Activated B cell treated with CpG ODN at 0.5 μM for 24 hours (primary cell): ENCODE measurements at regions of chr3 and their contacts with region 1.

Region 1: DNA sequence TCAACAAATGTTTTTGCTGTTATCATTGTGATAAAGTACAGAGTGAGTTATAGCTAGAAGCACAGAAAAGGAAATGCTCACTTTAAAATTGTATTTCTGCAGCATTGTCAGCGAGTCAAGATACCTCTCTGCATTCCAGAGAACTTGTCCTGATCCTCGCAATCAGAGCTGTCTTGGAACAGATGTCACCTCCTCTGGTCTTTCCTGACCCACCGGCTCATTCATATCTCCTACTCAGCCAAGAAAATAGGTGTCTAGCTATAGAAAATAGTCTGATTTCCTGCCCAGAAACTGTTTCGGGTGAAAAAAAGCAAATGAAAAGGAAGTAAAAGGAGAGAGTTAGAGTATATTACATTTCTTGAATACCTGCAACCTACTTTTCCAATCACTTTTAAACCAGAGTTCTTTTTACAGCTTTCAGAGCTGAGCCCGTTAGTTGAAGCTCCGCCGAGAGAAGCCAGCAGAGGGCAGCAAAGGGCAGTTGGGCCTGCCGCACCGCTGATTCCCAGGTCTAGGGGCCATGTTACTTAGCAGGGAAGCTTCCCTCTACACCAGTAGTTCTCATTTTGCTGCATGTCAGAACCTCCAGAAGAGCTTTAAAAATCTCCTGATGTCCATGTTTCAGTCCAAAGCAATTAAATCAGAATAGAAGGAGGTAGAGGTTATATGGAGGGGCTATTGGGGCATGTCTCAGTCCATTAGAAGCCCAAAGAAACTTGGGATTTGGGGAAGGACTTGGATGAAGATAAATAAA is 185.7 kb upstream of the THRB start:
- DNase-seq: peak; percentile 28
- ATAC-seq: no peak
- H3K4me3 Mint-ChIP-seq: no peak overlapping the region
- H3K27ac Mint-ChIP-seq: no peak overlapping the region
- H3K4me1 Mint-ChIP-seq: peaks cover 7% of the 10 kb centered on the region
- H3K27me3 Mint-ChIP-seq: no peaks in the 10 kb centered on the region
- CTCF ChIP-seq: peak; percentile 84

Region 2: DNA sequence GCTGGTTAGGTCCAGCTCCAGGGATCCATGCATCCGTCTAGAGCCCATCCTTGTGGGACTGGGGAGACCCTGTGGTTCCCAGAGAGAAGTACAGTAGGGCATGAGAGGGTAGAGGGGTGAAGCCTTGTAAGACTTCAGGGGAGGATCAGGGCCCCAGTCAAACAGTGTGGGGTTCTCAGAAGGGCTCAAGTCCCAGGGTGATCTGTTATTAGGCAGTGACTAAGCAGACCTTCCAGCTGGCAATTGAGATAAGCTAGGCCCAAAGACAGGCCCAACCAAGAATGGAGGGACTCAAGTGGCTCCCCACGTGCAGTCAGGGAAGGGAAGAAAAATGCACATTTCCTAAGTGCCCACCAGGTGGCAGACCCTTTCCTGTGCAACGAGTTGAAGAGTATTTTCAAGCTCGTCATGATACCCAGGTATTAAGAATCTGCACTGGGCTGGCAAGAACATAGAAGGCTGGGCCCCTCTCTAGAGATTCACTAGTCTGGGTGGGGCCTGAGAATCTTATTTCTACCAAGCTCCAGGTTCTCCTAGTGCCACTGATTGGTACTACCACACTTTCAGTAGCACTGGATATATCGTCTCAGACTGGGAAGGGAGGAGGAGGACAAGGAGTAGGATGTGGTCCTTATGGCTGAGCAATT is 494.5 kb before region 1 on chr3:
- CTCF ChIA-PET with region 1: interaction called, 9 read pairs
- POLR2A ChIA-PET with region 1: no interaction called
- intact Hi-C with region 1: loop called (anchors 1 kb)
- DNase-seq: no peak
- ATAC-seq: peak; percentile 62
- H3K4me3 Mint-ChIP-seq: no peak overlapping the region
- H3K27ac Mint-ChIP-seq: no peak overlapping the region
- H3K4me1 Mint-ChIP-seq: no peaks in the 10 kb centered on the region
- H3K27me3 Mint-ChIP-seq: no peaks in the 10 kb centered on the region
- CTCF ChIP-seq: no peak

Region 3: DNA sequence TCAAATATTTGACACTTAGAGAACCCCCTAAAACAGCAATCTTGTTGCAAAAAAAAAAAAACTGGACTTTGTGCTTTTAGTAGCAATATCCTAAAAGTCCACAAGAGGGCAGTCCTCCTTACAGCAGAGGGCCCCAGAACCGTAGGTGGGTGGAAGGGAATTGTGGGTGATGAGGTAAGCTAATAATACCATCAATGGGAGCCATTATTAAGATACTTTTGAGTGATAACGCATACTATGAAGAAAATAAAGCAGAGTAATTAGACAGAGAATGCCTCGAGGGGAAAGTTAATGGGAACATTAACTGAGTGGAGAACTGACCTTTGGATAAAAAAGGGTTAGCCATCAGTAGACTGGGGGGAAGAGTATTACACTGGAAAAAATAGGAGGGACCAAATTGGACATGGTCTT is 415.6 kb before region 1 on chr3:
- CTCF ChIA-PET with region 1: interaction called, 5 read pairs
- POLR2A ChIA-PET with region 1: no interaction called
- intact Hi-C with region 1: loop called (anchors 1 kb)
- DNase-seq: no peak
- ATAC-seq: peak; percentile 49
- H3K4me3 Mint-ChIP-seq: no peak overlapping the region
- H3K27ac Mint-ChIP-seq: no peak overlapping the region
- H3K4me1 Mint-ChIP-seq: no peaks in the 10 kb centered on the region
- H3K27me3 Mint-ChIP-seq: peaks cover 6% of the 10 kb centered on the region
- CTCF ChIP-seq: peak; percentile 59

Region 4: DNA sequence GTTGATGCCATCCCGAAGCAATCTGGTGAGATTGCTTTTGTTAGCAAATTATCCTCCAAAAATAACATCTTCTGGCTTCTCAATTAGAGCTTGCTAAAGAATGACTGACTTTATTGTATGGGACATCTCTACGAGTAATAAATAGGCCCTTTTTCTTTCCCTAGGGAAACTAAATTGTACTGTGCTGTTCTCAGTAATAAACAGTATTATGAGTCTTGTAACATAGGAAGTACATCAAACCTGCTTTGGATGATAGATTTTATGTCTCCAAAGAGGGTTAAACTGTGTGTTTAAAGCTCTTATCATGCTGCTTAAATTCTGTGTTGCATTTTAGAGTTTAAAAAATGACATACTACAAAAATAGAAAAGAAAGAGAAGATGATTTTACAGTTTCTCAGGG is 32.3 kb before region 1 on chr3:
- CTCF ChIA-PET with region 1: no interaction called
- POLR2A ChIA-PET with region 1: no interaction called
- intact Hi-C with region 1: no loop called
- DNase-seq: no peak
- ATAC-seq: no peak
- H3K4me3 Mint-ChIP-seq: no peak overlapping the region
- H3K27ac Mint-ChIP-seq: no peak overlapping the region
- H3K4me1 Mint-ChIP-seq: no peaks in the 10 kb centered on the region
- H3K27me3 Mint-ChIP-seq: no peaks in the 10 kb centered on the region
- CTCF ChIP-seq: no peak

Region 5: DNA sequence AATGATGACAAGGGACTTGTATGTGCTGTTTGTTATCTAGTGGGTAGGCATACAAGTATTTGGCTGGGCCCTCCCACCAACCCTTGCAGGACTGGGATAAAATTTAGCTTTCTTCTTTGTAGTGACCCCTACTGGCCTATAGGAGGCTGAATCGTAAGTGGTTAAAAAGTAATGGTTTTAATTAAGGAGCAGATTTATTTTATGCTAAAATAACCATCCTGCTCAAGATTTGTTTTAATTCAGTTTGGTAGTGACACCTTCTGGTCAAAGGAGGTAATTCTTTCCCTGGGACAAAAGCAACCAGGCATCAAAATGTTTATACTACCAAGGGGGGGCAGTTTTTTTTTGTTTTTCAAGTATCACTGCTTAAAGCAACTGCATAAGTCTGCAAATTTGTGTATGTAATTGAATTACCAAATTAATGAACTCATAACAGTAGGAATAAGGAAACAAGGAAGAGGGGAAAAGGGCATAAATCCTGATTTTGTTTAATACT is 913.7 kb after region 1 on chr3:
- CTCF ChIA-PET with region 1: interaction called, 3 read pairs
- POLR2A ChIA-PET with region 1: no interaction called
- intact Hi-C with region 1: loop called (anchors 1 kb)
- DNase-seq: no peak
- ATAC-seq: peak; percentile 64
- H3K4me3 Mint-ChIP-seq: no peak overlapping the region
- H3K27ac Mint-ChIP-seq: no peak overlapping the region
- H3K4me1 Mint-ChIP-seq: no peaks in the 10 kb centered on the region
- H3K27me3 Mint-ChIP-seq: no peaks in the 10 kb centered on the region
- CTCF ChIP-seq: peak; percentile 33